GM10248 (cell line): ENCODE measurements at regions of chr17 and their contacts with region 1.

Region 1: GRCh38 chr17:8109661-8110464 is 8.5 kb downstream of the ALOXE3 start:
- DNase-seq: peak; percentile 87
- CTCF ChIP-seq: peak; percentile 93

Region 2: GRCh38 chr17:7496470-7497183 is 613.2 kb before region 1 on chr17:
- CTCF ChIA-PET with region 1: no interaction called
- POLR2A ChIA-PET with region 1: no interaction called
- DNase-seq: no peak
- CTCF ChIP-seq: no peak

Region 3: GRCh38 chr17:8079291-8080207 is 30.3 kb before region 1 on chr17:
- CTCF ChIA-PET with region 1: interaction called, 86 read pairs
- POLR2A ChIA-PET with region 1: no interaction called
- DNase-seq: peak; percentile 92
- CTCF ChIP-seq: peak; percentile 93